ENCODE measurements at regions of chr16 and their contacts with region 1.

Region 1: DNA sequence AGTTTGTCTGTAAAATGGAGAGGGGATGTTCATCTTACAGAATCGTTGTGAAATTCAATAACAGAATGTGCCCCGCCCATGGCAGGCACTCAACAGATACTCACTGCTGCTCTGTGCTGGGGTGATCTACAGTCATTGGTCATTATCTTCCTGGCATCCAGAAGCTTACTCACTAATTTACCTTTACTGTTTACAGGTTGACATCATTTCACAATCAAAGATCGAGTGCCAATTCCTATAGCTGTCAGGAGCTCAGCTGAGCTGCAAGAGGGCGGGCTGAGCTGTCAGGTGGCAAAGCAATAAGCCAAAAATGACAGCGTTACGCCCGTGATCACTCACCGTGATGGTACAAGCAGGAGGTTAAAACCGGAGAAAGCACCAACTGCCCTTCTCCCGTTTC is 51.2 kb downstream of the LITAF start:
- DNase-seq: no peak
- ATAC-seq: no peak

Region 2: GRCh38 chr16:11386791-11387546 is 148.5 kb before region 1 on chr16:
- intact Hi-C with region 1: no loop called
- DNase-seq: peak; percentile 56
- ATAC-seq: peak; percentile 75 to 76

Region 3: DNA sequence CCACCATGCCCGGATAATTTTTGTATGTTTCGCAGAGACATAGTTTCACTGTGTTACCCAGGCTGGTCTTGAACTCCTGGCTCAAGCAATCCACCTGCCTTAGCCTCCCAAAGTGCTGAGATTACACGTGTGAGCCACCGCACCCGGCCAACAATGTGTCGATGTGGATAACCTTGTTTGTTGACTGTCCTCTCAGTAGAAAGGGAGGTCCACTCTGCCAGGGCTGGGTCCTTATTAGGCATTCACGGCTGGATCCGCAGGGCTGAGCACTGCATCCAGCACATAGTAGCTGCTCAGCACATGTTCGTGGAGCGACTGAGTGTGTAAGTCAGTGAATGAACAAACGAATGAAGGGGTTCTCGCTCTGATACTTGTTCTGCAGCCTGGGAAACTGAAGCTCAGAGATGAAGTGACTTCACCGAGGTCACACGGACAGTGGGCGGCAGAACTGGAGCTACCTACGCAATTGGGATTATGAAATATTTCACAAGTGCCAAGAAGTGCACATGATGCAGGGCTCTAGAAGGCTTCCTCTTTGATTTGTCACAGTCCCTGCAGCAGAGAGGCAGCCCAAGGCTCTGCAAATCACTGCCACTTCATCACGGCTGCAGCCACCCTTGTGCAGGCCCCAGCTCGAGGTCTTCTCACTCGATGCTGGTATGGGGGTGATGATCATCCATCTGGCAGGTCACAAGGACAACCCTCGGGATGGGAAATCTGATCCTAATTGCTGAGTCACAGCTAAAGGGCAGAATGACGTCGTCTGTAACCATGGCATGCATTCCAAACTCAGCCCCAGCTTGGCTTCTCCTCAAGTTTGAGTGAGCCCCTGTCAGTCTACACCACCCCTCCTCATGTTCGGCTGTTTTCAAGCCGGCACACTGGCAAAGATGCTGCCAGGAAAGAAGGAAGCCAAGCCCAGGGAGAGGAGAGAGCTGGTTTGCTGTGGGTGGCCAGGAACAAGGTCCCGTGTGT is 104.7 kb after region 1 on chr16:
- intact Hi-C with region 1: loop called (anchors 5 to 10 kb)
- DNase-seq: peak; percentile 85
- ATAC-seq: peak; percentile 88 to 93

Region 4: GRCh38 chr16:11715246-11715947 is 179.9 kb after region 1 on chr16:
- intact Hi-C with region 1: loop called (anchors 5 to 10 kb)
- DNase-seq: no peak
- ATAC-seq: no peak

Region 5: DNA sequence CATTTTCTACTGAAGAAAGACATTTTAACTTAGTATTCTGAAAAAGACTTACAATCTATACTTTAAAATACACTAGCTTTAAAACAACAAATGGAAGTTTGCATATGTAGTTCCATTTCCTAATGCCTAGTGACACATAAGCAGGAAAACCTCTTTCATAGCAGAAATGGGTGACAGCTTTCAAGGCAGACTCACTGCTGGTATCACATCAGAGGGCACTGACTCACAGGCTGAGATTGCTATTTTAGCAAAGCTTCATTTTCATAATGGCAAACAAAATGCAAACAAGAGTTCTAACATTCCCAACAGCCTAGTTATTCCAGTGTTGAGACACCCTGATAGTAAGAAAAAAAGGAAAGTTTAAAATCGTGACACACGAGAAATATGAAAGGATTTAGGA is 361.3 kb after region 1 on chr16:
- intact Hi-C with region 1: no loop called
- DNase-seq: no peak
- ATAC-seq: peak in 1 of 2 donors; percentile 31

Region 6: DNA sequence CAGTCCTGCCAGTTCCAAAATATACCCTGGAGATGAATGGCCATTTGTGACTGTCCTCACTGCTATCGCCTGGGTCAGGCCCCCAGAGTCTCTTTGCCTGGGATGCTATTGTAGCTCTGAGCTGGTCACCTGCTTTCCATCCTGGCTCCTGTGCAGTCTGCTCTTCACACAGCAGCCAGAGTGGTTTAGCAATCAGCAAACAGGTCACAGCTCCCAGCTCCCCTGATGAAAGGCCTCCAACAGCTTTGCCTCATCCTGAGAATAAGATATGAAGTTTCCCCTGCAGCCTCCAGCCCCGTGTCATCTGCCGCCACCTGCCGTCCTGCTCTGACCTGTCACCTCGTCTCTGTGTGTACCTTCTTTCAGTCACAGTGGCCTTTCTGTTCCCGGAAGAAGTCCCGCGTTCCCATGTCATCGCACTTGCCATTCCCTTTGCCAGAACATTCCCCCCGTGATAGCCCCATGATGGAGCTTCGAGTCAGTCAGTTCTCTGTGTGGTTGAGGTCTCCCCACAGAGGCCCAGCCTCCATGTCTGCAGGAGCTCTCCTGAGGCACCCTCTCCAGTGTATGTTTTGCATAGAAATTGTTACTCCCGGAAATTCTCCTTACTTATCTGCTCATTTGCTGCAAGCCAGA is 722.6 kb after region 1 on chr16:
- intact Hi-C with region 1: no loop called
- DNase-seq: no peak
- ATAC-seq: peak in 1 of 2 donors; percentile 50